ENCODE measurements at regions of chr17 and their contacts with region 1.

Region 1: GRCh38 chr17:82297714-82298537 is 19.5 kb downstream of the CD7 start:
- DNase-seq: peak; percentile 98
- H3K4me3 ChIP-seq: peak overlapping the region; percentile 19 to 73 (median 66)
- H3K27ac ChIP-seq: peak overlapping the region; percentile 96 to 97
- H3K4me1 ChIP-seq: peaks cover 5 to 74% (median 72%) of the 10 kb centered on the region in 4 experiments
- H3K27me3 ChIP-seq: no peaks in the 10 kb centered on the region

Region 2: GRCh38 chr17:82273327-82274133 is 24.4 kb before region 1 on chr17 and contains the start of gene CSNK1D:
- CTCF ChIA-PET with region 1: interaction called, 9 read pairs
- POLR2A ChIA-PET with region 1: interaction called, 29 read pairs
- DNase-seq: peak; percentile 85 to 90 (median 89)
- H3K4me3 ChIP-seq: peak within 1 kb of the TSS; percentile 45 to 87 (median 74)
- H3K27ac ChIP-seq: peak within 1 kb of the TSS; percentile 89 to 96
- H3K4me1 ChIP-seq: peaks cover 6 to 23% (median 15%) of the 10 kb centered on the region in 4 experiments
- H3K27me3 ChIP-seq: no peaks in the 10 kb centered on the region

Region 3: GRCh38 chr17:82315703-82316358 is 17.9 kb after region 1 on chr17:
- CTCF ChIA-PET with region 1: interaction called, 136 read pairs
- POLR2A ChIA-PET with region 1: interaction called, 5 read pairs
- DNase-seq: peak in 1 of 3 donors; percentile 61
- H3K4me3 ChIP-seq: peak overlapping the region in 4 of 7 experiments; percentile 26 to 64 (median 45)
- H3K27ac ChIP-seq: no peak overlapping the region
- H3K4me1 ChIP-seq: peaks cover 0 to 43% (median 32%) of the 10 kb centered on the region in 4 experiments
- H3K27me3 ChIP-seq: no peaks in the 10 kb centered on the region

Region 4: DNA sequence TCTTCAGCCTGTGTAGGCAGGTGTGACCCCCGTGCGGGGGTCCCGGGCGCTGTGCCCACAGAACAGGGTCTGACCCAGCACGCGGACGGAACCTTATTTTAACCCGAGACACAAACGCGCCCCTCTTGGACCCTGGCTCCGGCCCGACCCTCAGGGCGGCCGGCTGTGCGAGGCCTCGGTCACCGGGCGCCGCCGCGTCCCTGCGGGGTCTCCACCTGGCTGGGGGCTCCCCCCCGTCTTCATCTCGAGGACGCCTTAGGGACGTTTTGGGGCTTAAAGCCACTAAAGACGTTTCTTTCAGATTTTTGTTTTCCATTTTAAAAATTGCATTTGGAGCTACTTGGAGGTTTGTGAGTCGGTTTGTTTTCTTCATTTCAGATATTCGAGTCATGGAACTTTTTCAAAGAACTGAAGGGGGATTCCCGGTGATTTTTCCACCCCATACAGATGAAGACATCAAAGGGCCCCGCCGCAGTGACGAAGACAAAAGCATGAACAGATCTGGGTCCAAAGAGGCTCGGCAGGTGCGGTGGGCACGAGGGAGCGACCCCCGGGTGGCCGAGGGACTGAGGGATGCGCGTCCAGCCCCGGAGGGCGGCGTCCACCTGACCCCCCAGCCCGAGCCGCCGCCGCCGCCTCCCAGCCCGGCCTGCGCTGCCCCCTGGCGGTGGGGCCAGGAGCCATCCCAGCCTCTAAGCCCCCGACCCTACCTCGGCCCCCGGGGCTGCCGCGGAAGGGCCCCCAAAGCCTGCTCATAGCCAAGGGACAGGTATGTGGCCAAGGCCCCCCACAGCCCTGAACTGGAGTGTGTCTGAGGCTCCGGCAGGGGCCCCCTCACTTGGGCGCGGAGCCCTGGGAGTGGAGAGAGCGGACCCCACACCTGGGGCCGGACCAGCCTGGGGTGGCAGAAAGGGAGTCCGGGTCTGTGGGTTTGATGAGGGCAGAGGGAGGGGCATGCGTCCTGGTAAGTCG is 23.3 kb after region 1 on chr17:
- CTCF ChIA-PET with region 1: interaction called, 136 read pairs
- POLR2A ChIA-PET with region 1: interaction called, 5 read pairs
- DNase-seq: peak in 2 of 3 donors; percentile 69 to 70
- H3K4me3 ChIP-seq: peak overlapping the region in 1 of 7 experiments; percentile 52
- H3K27ac ChIP-seq: no peak overlapping the region
- H3K4me1 ChIP-seq: peaks cover 0 to 27% (median 16%) of the 10 kb centered on the region in 4 experiments
- H3K27me3 ChIP-seq: no peaks in the 10 kb centered on the region

Region 5: DNA sequence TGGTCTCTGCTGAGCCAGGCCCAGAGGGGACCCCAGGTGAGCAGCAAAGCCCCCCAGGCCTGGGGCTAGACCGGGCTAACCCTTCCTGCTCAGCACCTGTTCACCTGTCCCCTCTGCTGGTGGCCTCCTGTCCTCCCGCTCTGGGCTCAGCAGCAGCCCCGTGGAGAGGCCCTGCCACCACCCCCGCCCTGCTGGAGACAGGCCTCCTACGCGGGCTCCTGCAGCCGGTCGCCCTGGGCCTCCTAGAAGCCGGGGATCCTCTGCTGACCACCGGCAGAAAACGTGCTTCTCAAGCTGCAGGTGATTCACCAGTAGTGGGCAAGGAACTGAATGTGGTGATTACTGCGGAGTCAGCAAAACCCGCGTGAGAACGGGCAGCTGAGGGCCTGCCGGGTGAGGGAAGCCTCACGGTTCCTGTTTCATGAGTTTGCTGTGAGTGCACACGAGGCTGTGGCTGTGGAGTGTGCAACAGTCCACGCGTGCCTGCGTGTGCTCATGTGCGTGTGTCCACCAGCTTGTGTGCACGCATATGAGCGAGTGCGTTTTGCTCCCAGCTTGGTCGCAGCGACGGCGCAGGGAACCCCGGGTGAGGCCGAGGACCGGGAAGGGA is 34.8 kb after region 1 on chr17:
- CTCF ChIA-PET with region 1: interaction called, 136 read pairs
- POLR2A ChIA-PET with region 1: interaction called, 7 read pairs
- DNase-seq: peak; percentile 57 to 86 (median 82)
- H3K4me3 ChIP-seq: peak overlapping the region in 5 of 7 experiments; percentile 2 to 72 (median 56)
- H3K27ac ChIP-seq: peak overlapping the region in 1 of 2 experiments; percentile 76
- H3K4me1 ChIP-seq: peaks cover 0 to 48% (median 48%) of the 10 kb centered on the region in 4 experiments
- H3K27me3 ChIP-seq: peaks cover 0 to 7% (median 0%) of the 10 kb centered on the region in 5 experiments

Region 6: GRCh38 chr17:82412535-82413520 is 114.9 kb after region 1 on chr17:
- CTCF ChIA-PET with region 1: no interaction called
- POLR2A ChIA-PET with region 1: no interaction called
- DNase-seq: no peak
- H3K4me3 ChIP-seq: no peak overlapping the region
- H3K27ac ChIP-seq: no peak overlapping the region
- H3K4me1 ChIP-seq: peaks cover 3 to 11% (median 7%) of the 10 kb centered on the region in 4 experiments
- H3K27me3 ChIP-seq: no peaks in the 10 kb centered on the region